Heart left ventricle (tissue), 16 donors: ENCODE measurements at regions of chr2 and their contacts with region 1.

Region 1: GRCh38 chr2:23015651-23016200 is 369.3 kb upstream of the KLHL29 start:
- DNase-seq: no peak
- ATAC-seq: no peak
- H3K4me3 ChIP-seq: no peak overlapping the region
- H3K27ac ChIP-seq: no peak overlapping the region
- H3K4me1 ChIP-seq: no peaks in the 10 kb centered on the region
- H3K27me3 ChIP-seq: no peaks in the 10 kb centered on the region
- CTCF ChIP-seq: no peak
- POLR2A ChIP-seq: no peak

Region 2: DNA sequence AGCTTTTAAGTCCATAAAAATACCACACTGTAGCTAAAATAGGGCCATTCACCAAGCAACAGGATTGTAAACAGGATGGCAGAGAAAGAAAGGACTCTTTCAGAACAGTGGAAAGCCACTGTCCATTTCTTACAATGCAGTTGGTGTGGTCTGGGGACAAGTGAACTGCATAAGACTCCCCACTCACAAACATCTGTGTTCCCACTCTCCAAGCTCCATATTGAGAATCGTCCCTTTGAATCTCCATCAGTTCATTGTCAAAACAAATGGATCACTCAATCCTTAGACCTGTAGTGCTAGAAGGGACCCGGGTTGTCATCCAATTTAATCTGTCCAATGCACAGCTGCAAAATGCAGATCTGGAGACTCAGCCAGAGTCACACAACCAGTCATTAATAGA is 21.9 kb after region 1 on chr2:
- intact Hi-C with region 1: loop called in 1 of 10 experiments (anchors 2 kb)
- DNase-seq: no peak
- ATAC-seq: no peak
- H3K4me3 ChIP-seq: no peak overlapping the region
- H3K27ac ChIP-seq: no peak overlapping the region
- H3K4me1 ChIP-seq: peaks cover 0 to 17% (median 0%) of the 10 kb centered on the region in 12 donors
- H3K27me3 ChIP-seq: no peaks in the 10 kb centered on the region
- CTCF ChIP-seq: no peak
- POLR2A ChIP-seq: no peak

Region 3: DNA sequence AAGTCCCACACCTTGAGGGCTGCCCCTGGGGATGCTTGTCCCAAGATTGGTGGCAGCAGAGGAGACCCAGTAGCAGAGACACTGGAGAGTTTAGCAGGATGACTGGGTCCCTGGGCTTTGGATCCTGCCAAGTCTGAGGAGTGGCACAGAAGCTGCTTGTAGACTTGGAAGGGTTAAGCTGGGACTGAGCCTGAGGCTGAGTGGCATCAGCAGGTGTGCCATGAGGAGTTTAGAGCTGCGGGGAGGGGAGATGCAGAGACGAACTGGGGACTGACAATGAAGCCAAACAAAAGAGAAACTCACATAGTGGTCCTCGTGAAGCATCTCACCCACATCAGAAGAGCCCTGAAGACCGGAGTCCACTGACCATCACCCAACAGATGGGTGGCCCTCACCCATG is 39.5 kb after region 1 on chr2:
- intact Hi-C with region 1: no loop called
- DNase-seq: no peak
- ATAC-seq: no peak
- H3K4me3 ChIP-seq: no peak overlapping the region
- H3K27ac ChIP-seq: no peak overlapping the region
- H3K4me1 ChIP-seq: no peaks in the 10 kb centered on the region
- H3K27me3 ChIP-seq: peaks cover 0 to 5% (median 0%) of the 10 kb centered on the region in 9 donors
- CTCF ChIP-seq: no peak
- POLR2A ChIP-seq: no peak